ENCODE measurements at regions of chr1 and their contacts with region 1.

Region 1: DNA sequence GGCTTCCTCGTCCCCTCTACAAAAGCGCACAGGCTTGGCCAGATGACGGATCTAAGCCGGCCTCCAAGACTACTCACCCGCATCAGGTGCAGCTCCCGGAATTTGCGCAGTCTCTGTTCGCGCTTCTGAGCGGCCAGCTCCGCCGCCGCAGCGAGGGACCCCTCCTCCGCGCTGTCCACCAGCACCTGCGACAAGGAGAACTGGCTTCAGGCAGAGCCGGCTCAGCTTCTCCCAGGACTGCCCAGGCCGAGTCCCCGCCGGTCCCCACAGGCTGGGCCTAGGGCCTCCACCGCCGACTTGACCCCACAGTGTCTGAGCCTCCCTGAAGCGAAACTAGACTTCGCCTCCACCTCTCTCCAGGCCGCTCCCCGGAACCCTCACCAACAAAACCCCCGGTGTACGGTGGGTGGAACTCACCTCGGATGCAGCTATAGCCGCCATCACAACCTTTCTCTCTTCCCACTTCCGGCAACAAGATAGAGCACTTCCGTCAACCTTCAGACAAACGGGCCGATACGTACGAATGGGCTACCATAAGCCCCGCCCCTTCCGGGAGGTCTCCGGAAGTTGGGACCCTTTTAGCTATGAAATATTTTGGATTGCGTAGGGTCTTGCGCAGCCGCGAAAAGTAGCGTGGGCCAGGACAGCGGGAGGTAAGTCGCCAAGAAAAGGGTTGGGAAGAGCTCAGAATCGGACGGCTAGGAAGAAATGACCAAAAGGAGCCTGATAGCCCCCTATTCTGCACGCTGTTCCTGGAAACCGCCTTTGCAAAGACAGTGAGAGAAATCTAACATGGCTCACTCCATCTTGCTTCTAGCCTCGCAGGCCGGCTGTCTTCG is at the start of gene SYF2:
- DNase-seq: peak; percentile 88 to 95 (median 91)
- H3K4me3 ChIP-seq: peak within 1 kb of the TSS; percentile 80 to 83
- H3K4me3 Mint-ChIP-seq: no peak within 1 kb of the TSS
- H3K27ac ChIP-seq: peak within 1 kb of the TSS; percentile 94
- H3K27ac Mint-ChIP-seq: no peak within 1 kb of the TSS
- H3K4me1 ChIP-seq: peaks cover 27% of the 10 kb centered on the region
- H3K4me1 Mint-ChIP-seq: peaks cover 13 to 26% (median 15%) of the 10 kb centered on the region in 4 donors
- H3K27me3 ChIP-seq: no peaks in the 10 kb centered on the region
- H3K27me3 Mint-ChIP-seq: no peaks in the 10 kb centered on the region
- total RNA-seq, gene SYF2: 64.3 to 66.8 TPM

Region 2: GRCh38 chr1:25247024-25247828 is 15.0 kb after region 1 on chr1 and contains the start of gene RSRP1:
- CTCF ChIA-PET with region 1: interaction called, 7 read pairs
- POLR2A ChIA-PET with region 1: interaction called, 109 read pairs
- intact Hi-C with region 1: loop called (anchors 1 kb)
- DNase-seq: peak; percentile 99 to 100 (median 99)
- H3K4me3 ChIP-seq: peak within 1 kb of the TSS; percentile 89 to 98
- H3K4me3 Mint-ChIP-seq: peak within 1 kb of the TSS; percentile 96 to 100 (median 98)
- H3K27ac ChIP-seq: peak within 1 kb of the TSS; percentile 97
- H3K27ac Mint-ChIP-seq: peak within 1 kb of the TSS; percentile 99 to 100 (median 100)
- H3K4me1 ChIP-seq: peaks cover 45% of the 10 kb centered on the region
- H3K4me1 Mint-ChIP-seq: peaks cover 25 to 66% (median 39%) of the 10 kb centered on the region in 4 donors
- H3K27me3 ChIP-seq: no peaks in the 10 kb centered on the region
- H3K27me3 Mint-ChIP-seq: peaks cover 0 to 2% of the 10 kb centered on the region in 2 donors
- total RNA-seq, gene RSRP1: 470 to 494 TPM

Measured in CD4-positive, alpha-beta memory T cell (primary cell).